CD8-positive, alpha-beta memory T cell (primary cell): ENCODE measurements at regions of chr16 and their contacts with region 1.

Region 1: GRCh38 chr16:67546761-67547422 is 15.4 kb upstream of the CTCF start:
- DNase-seq: peak; percentile 64 to 79 (median 67)
- H3K4me3 ChIP-seq: peak overlapping the region; percentile 64
- H3K4me3 Mint-ChIP-seq: peak overlapping the region in 3 of 7 donors; percentile 13 to 66 (median 54)
- H3K27ac ChIP-seq: no peak overlapping the region
- H3K27ac Mint-ChIP-seq: peak overlapping the region; percentile 12 to 93 (median 79)
- H3K4me1 ChIP-seq: peaks cover 39% of the 10 kb centered on the region
- H3K4me1 Mint-ChIP-seq: peaks cover 30 to 55% (median 32%) of the 10 kb centered on the region in 3 donors
- H3K27me3 ChIP-seq: no peaks in the 10 kb centered on the region
- H3K27me3 Mint-ChIP-seq: no peaks in the 10 kb centered on the region

Region 2: GRCh38 chr16:67356396-67356795 is 190.5 kb before region 1 on chr16:
- CTCF ChIA-PET with region 1: no interaction called
- POLR2A ChIA-PET with region 1: no interaction called
- DNase-seq: no peak
- H3K4me3 ChIP-seq: no peak overlapping the region
- H3K4me3 Mint-ChIP-seq: no peak overlapping the region
- H3K27ac ChIP-seq: no peak overlapping the region
- H3K27ac Mint-ChIP-seq: peak overlapping the region in 1 of 8 donors; percentile 13
- H3K4me1 ChIP-seq: no peaks in the 10 kb centered on the region
- H3K4me1 Mint-ChIP-seq: no peaks in the 10 kb centered on the region
- H3K27me3 ChIP-seq: no peaks in the 10 kb centered on the region
- H3K27me3 Mint-ChIP-seq: peaks cover 5 to 34% of the 10 kb centered on the region in 2 donors

Region 3: GRCh38 chr16:67514382-67514828 is 32.5 kb before region 1 on chr16:
- CTCF ChIA-PET with region 1: interaction called, 125 read pairs
- POLR2A ChIA-PET with region 1: no interaction called
- DNase-seq: peak; percentile 72 to 85 (median 73)
- H3K4me3 ChIP-seq: no peak overlapping the region
- H3K4me3 Mint-ChIP-seq: peak overlapping the region in 1 of 7 donors; percentile 32
- H3K27ac ChIP-seq: no peak overlapping the region
- H3K27ac Mint-ChIP-seq: peak overlapping the region in 4 of 8 donors; percentile 33 to 74 (median 63)
- H3K4me1 ChIP-seq: peaks cover 11% of the 10 kb centered on the region
- H3K4me1 Mint-ChIP-seq: peaks cover 9 to 17% (median 14%) of the 10 kb centered on the region in 3 donors
- H3K27me3 ChIP-seq: no peaks in the 10 kb centered on the region
- H3K27me3 Mint-ChIP-seq: peaks cover 0 to under 1% of the 10 kb centered on the region in 2 donors

Region 4: GRCh38 chr16:67561824-67562525 is 15.1 kb after region 1 on chr16:
- CTCF ChIA-PET with region 1: interaction called, 164 read pairs
- POLR2A ChIA-PET with region 1: interaction called, 46 read pairs
- DNase-seq: peak; percentile 95 to 98 (median 96)
- H3K4me3 ChIP-seq: peak overlapping the region; percentile 67
- H3K4me3 Mint-ChIP-seq: peak overlapping the region; percentile 87 to 98 (median 91)
- H3K27ac ChIP-seq: peak overlapping the region; percentile 78
- H3K27ac Mint-ChIP-seq: peak overlapping the region; percentile 85 to 96 (median 93)
- H3K4me1 ChIP-seq: peaks cover 32% of the 10 kb centered on the region
- H3K4me1 Mint-ChIP-seq: peaks cover 35 to 60% (median 48%) of the 10 kb centered on the region in 3 donors
- H3K27me3 ChIP-seq: no peaks in the 10 kb centered on the region
- H3K27me3 Mint-ChIP-seq: no peaks in the 10 kb centered on the region

Region 5: DNA sequence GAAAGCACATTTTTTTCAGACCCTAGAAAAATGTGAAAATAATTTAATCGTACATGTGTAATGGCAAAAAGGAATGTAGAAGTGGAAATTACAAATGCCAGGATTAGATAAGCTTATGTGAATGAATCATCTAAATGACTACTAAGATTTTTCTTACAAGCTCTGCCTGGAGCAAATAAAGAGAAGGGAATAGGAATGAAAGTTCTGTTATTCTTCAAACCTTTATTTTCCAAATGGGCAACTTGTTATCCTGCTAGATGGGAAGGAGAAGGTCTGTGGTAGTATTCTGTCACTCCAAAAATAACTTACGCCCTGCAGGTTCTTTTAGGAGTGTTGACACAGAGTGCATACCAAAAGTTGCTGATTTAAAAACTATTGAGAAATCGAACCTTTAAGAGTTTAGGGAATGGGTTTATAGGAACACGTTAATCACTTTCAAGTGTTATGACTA is 25.1 kb after region 1 on chr16:
- CTCF ChIA-PET with region 1: interaction called, 12 read pairs
- POLR2A ChIA-PET with region 1: no interaction called
- DNase-seq: no peak
- H3K4me3 ChIP-seq: no peak overlapping the region
- H3K4me3 Mint-ChIP-seq: no peak overlapping the region
- H3K27ac ChIP-seq: no peak overlapping the region
- H3K27ac Mint-ChIP-seq: peak overlapping the region in 2 of 8 donors; percentile 33 to 39
- H3K4me1 ChIP-seq: peaks cover 6% of the 10 kb centered on the region
- H3K4me1 Mint-ChIP-seq: peaks cover 19 to 56% (median 25%) of the 10 kb centered on the region in 3 donors
- H3K27me3 ChIP-seq: no peaks in the 10 kb centered on the region
- H3K27me3 Mint-ChIP-seq: no peaks in the 10 kb centered on the region

Region 6: DNA sequence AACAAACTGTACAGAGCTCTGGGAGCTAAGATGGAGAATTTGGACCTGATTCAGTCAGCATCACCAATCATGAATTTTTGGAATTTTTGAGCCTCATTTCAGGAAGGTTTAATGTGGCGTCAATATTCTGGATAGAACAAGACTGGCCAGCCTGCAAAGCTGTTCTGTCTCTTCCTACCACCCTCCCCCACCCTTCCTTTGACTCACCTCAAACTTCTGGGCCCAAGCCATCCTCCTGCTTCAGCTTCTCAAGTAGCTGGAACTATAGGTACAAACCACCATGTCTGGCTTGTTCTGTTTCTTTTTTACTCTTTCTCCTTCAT is 48.1 kb after region 1 on chr16:
- CTCF ChIA-PET with region 1: interaction called, 15 read pairs
- POLR2A ChIA-PET with region 1: no interaction called
- DNase-seq: no peak
- H3K4me3 ChIP-seq: no peak overlapping the region
- H3K4me3 Mint-ChIP-seq: no peak overlapping the region
- H3K27ac ChIP-seq: no peak overlapping the region
- H3K27ac Mint-ChIP-seq: peak overlapping the region in 7 of 8 donors; percentile 10 to 91 (median 48)
- H3K4me1 ChIP-seq: peaks cover 11% of the 10 kb centered on the region
- H3K4me1 Mint-ChIP-seq: peaks cover 39 to 60% (median 58%) of the 10 kb centered on the region in 3 donors
- H3K27me3 ChIP-seq: no peaks in the 10 kb centered on the region
- H3K27me3 Mint-ChIP-seq: no peaks in the 10 kb centered on the region

Region 7: GRCh38 chr16:67660564-67661028 is 113.7 kb after region 1 on chr16 and contains the start of gene PARD6A:
- CTCF ChIA-PET with region 1: interaction called, 32 read pairs
- POLR2A ChIA-PET with region 1: interaction called, 3 read pairs
- DNase-seq: peak; percentile 94 to 98 (median 95)
- H3K4me3 ChIP-seq: peak within 1 kb of the TSS; percentile 93
- H3K4me3 Mint-ChIP-seq: peak within 1 kb of the TSS; percentile 93 to 99 (median 94)
- H3K27ac ChIP-seq: peak within 1 kb of the TSS; percentile 98
- H3K27ac Mint-ChIP-seq: peak within 1 kb of the TSS; percentile 94 to 99 (median 96)
- H3K4me1 ChIP-seq: peaks cover 25% of the 10 kb centered on the region
- H3K4me1 Mint-ChIP-seq: peaks cover 14 to 37% (median 17%) of the 10 kb centered on the region in 3 donors
- H3K27me3 ChIP-seq: no peaks in the 10 kb centered on the region
- H3K27me3 Mint-ChIP-seq: peaks cover 0 to 3% of the 10 kb centered on the region in 2 donors
- total RNA-seq, gene PARD6A: 16.7 to 18.3 TPM

Region 8: DNA sequence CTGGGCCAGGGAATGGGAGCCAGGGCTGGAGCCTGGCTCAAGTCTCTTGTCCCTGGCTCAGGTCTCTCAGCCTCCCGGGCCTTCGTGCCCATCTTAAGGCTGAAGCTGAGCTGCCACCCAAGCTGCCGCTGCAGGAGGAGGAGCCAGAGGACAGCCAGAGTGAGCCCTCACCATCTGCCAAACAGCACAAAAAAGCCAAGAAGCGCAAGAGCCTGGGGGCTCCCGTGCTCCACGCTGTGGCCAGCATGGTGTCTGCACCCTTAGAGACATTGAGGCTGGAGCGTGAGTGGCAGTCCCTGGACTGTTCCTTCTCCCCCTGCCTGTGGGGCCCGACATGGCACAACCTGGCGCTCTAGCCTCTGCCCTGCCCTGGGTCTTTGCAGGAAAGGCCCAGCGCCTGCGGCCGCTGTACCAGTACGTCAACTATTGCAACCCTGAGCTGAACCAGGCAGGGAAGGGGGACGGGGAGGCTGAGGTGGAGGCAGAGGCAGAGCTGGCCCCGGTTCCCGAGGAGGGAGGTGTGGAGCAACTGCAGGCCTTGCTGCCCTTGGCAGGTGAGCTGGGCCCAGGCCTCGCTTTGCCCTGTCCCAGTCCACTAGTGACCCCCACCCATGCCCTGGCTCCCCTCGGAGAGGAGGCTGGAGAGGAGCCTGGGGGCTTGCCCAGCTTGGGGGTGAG is 121.1 kb after region 1 on chr16:
- CTCF ChIA-PET with region 1: interaction called, 32 read pairs
- POLR2A ChIA-PET with region 1: no interaction called
- DNase-seq: peak; percentile 48 to 86 (median 74)
- H3K4me3 ChIP-seq: no peak overlapping the region
- H3K4me3 Mint-ChIP-seq: peak overlapping the region; percentile 19 to 94 (median 71)
- H3K27ac ChIP-seq: no peak overlapping the region
- H3K27ac Mint-ChIP-seq: peak overlapping the region in 5 of 8 donors; percentile 6 to 80 (median 42)
- H3K4me1 ChIP-seq: peaks cover 17% of the 10 kb centered on the region
- H3K4me1 Mint-ChIP-seq: peaks cover 7 to 27% (median 12%) of the 10 kb centered on the region in 3 donors
- H3K27me3 ChIP-seq: no peaks in the 10 kb centered on the region
- H3K27me3 Mint-ChIP-seq: no peaks in the 10 kb centered on the region

Region 9: DNA sequence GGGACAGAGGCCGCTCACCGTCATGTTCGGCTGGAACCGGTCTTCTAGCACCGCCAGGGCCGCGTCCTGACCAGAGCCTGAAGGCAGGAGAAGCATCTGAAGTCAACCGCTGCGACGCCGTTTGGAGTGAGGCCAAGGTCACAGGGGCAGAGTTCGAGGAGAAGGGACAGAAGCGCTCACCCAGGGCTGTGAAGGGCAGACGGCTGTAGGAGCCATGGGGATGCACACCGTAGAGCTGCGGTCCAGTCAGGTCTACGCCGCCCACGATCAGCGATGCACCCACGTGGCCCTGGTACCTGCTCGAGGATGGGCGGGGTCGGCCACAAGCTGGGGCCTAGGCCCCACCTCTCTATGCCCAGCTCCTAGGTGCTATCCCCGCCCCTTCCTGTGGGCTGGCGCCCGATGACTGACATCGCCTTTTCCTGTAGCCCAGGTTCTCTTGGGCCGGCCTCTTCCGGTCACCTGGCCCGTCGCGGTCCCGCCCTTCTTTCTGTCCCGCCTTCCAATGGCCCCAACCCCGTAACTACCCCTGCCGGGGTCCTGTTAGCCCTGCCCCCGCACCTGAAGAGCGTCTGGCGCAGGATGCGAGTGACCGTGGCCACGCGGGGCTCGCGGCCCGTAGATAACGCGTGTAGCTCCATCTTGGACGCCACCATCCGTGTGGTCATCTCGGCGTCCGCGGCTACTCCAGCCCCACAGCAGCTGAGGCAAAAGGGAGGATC is 388.7 kb after region 1 on chr16:
- CTCF ChIA-PET with region 1: no interaction called
- POLR2A ChIA-PET with region 1: no interaction called
- DNase-seq: peak; percentile 90 to 97 (median 95)
- H3K4me3 ChIP-seq: peak overlapping the region; percentile 97
- H3K4me3 Mint-ChIP-seq: peak overlapping the region; percentile 100
- H3K27ac ChIP-seq: peak overlapping the region; percentile 87
- H3K27ac Mint-ChIP-seq: peak overlapping the region; percentile 96 to 99 (median 98)
- H3K4me1 ChIP-seq: peaks cover 39% of the 10 kb centered on the region
- H3K4me1 Mint-ChIP-seq: peaks cover 34 to 54% (median 34%) of the 10 kb centered on the region in 3 donors
- H3K27me3 ChIP-seq: no peaks in the 10 kb centered on the region
- H3K27me3 Mint-ChIP-seq: peaks cover 0 to 3% of the 10 kb centered on the region in 2 donors

Region 10: GRCh38 chr16:68460067-68460466 is 913.2 kb after region 1 on chr16:
- CTCF ChIA-PET with region 1: no interaction called
- POLR2A ChIA-PET with region 1: no interaction called
- DNase-seq: no peak
- H3K4me3 ChIP-seq: no peak overlapping the region
- H3K4me3 Mint-ChIP-seq: no peak overlapping the region
- H3K27ac ChIP-seq: no peak overlapping the region
- H3K27ac Mint-ChIP-seq: no peak overlapping the region
- H3K4me1 ChIP-seq: no peaks in the 10 kb centered on the region
- H3K4me1 Mint-ChIP-seq: no peaks in the 10 kb centered on the region
- H3K27me3 ChIP-seq: no peaks in the 10 kb centered on the region
- H3K27me3 Mint-ChIP-seq: peaks cover 17 to 26% of the 10 kb centered on the region in 2 donors